GM18951 (cell line): ENCODE measurements at regions of chr16 and their contacts with region 1.

Region 1: DNA sequence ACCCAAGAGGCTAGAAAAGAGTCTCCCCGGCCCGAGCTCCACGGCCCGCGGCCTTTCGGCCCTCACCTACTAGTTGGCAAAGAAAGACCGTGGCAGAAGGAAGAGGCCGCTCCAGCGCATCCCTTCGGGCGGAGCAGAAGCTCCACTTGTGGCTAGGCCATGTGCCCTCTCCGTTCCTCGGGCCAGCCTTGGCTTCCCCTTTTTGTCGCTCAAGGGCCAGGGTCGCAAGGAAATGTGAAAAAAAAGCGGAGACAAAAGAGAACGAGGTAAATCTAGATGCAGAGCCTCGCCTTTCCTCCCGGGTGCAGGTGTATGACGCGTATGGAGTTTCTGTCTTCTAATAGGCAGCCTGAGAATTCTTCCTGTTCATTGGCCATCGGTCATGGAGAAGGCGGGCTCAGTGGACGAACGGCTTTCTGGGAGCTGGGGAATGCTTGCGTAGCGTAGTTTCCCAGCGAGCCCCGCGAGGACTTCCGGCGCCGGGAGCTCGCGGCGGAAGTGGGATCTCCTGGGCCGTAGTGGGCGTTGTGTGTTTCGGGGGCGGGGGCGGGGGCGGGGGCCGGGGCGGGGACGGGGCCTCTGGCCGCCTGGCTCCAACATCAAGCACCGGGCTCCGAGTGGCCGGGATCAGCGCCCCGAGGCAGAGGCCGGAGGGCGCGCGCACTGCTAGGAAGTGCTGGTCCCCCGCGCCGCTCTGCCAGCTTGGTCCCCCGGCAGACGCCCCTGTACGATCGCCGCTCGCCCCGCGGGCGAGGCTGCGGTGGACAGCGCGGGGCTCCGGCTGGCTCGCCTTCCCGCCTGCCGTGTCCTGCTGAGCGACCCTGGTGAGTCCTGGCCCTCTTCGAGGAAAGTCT is at the start of gene ZNF213:
- POLR2A ChIP-seq: peak; percentile 71

Region 2: GRCh38 chr16:3099732-3100499 is 34.9 kb before region 1 on chr16:
- in situ Hi-C with region 1: loop called (anchors 5 kb)
- POLR2A ChIP-seq: no peak

Region 3: DNA sequence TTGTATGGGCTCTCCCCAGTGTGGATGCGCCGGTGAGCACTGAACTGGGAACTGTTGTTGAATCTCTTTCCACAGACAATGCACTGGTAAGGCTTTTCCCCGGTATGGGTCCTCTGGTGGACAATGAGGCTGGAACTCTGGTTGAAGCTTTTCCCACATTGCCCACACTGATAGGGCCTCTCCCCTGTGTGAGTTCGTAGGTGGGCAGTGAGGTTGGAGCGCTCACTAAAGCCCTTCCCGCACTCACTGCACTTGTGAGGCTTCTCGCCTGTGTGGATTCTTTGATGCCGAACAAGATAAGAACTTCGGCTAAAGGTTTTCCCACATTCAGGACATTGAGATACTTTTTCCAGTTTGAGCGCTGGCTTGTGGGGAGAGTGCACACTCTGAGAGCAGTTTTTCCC is 248.3 kb after region 1 on chr16:
- in situ Hi-C with region 1: no loop called
- POLR2A ChIP-seq: no peak